BJ (cell line): ENCODE measurements at regions of chr9 and their contacts with region 1.

Region 1: DNA sequence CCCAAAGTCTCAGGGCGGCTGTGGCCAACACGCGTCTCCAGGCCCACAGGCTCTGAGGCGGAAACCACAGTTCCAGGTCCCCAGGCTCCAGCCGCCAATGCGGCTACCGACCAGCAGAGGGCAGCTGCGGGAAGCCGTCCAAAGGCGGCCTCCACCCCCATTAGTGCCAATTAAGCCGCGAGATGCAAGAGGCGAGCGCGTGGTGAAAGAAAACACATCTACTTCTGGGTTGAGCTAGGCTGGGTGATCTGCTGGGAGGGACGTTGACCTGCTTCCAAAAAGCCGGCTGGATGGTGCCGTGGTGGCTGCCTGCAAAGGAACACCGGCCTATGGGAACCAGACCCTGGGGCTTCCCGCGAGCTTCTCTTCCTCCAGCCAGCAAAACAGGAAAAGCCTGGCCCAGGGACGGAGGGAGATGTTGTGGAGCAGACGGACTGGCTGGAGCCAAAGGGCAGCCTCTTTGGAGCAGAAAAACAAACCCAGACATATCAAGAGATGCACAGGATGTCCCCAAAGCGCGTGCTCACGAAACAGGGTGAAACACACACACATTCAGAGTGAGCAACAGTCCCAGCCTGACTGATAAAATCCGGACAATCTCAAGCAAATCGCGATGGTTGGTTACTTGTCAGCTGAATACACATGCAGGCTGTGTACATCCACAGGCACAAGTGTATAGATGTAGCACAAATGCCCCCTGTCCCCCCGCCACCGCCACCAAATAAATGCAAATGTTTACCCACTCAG is 187.1 kb upstream of the BRINP1 start:
- DNase-seq: peak; percentile 9
- H3K4me3 ChIP-seq: peak overlapping the region; percentile 35
- H3K27me3 ChIP-seq: no peaks in the 10 kb centered on the region
- CTCF ChIP-seq: peak; percentile 98

Region 2: DNA sequence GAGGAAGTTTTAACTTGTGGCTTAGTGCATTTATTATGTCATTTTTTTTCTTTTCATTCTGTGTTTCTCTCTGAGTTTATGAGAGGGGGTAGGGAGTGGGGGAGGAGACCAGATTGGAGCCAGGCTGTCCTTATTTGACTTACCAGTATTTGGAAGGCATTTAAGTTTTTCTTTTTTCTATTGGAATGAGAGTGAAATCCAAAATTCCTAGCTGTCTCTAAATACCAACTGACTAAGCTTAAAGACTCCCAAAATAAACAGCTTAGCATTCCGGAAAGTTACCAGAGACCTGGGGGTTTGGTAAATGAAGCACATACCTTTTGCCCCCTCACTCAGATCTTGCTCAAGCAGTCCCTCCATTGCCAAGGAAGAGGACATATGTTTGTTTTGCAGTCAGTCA is 394.8 kb after region 1 on chr9:
- CTCF ChIA-PET with region 1: interaction called, 14 read pairs
- POLR2A ChIA-PET with region 1: no interaction called
- DNase-seq: peak; percentile 100
- H3K4me3 ChIP-seq: no peak overlapping the region
- H3K27me3 ChIP-seq: no peaks in the 10 kb centered on the region
- CTCF ChIP-seq: no peak

Region 3: GRCh38 chr9:119968836-119969707 is 412.8 kb after region 1 on chr9:
- CTCF ChIA-PET with region 1: interaction called, 103 read pairs
- POLR2A ChIA-PET with region 1: no interaction called
- DNase-seq: peak; percentile 25
- H3K4me3 ChIP-seq: no peak overlapping the region
- H3K27me3 ChIP-seq: no peaks in the 10 kb centered on the region
- CTCF ChIP-seq: peak; percentile 98

Region 4: DNA sequence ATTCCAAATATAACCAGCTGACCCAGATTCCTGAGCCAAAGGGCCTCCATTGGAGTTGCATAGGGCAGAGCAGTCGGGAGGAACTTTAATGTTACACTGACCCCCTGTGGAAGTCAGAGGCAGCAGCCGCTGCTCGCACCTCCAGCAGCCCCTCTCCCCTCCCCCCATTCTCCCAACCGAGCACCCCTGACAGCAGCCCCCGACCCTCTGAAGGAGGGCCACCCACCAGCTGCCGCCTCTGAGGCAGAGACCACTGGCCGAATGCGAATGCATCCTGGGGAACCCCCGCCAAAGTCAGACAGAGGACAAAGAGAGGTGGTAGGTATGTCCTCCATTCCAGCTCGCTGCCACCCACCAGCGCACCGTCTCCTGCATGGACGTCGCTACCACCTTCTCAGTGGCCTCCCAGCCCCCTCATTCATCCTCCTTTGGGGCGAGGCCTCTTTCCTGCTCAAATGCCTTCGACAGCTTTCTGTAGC is 792.7 kb after region 1 on chr9:
- CTCF ChIA-PET with region 1: interaction called, 10 read pairs
- POLR2A ChIA-PET with region 1: no interaction called
- DNase-seq: no peak
- H3K4me3 ChIP-seq: no peak overlapping the region
- H3K27me3 ChIP-seq: no peaks in the 10 kb centered on the region
- CTCF ChIP-seq: peak; percentile 65